ENCODE measurements at regions of chr6 and their contacts with region 1.

Region 1: DNA sequence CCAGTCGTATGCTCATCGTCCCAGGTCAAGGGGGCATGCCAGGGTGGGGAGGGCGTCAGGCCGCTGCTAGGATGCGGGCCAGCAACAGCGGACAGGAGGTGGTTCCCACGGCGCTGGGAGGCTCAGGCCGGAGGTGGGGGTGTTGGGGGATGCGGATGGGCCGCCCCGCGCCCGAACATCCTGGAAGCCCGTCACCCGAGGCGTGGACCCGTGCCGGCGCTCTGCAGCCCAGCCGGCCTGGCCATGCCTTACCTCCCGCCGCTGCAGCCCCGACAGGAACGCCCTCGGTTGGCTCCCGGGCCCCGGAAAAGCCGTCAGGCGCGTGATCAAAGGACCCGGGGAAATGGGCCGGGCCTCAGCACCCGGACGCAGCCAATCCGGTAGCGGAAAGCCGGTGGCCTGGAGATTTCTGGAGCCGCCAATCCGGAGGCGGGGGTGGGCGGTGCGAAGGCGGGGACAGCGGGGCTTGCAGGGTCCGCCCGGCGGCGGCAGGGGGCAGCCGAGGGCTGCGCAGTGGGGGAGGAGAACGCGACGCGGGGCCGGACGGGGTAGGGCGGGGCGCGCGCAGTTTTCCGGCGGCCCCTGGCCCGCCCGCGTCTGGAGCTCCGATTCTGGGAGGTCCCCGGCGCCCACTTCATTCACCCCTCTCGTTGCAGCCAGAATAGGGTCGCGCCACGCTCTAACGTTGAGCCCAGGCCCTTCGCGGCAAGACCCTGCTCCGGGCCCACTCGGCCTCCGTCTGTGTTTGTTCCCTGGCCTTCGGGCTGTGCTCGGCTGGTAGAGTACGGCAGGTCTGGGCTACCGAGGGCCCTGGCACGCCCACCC is at the start of gene SMIM29:
- DNase-seq: peak; percentile 100
- H3K4me3 Mint-ChIP-seq: peak within 1 kb of the TSS; percentile 81
- H3K27ac Mint-ChIP-seq: peak within 1 kb of the TSS; percentile 97
- H3K4me1 Mint-ChIP-seq: peaks cover 55% of the 10 kb centered on the region
- H3K27me3 Mint-ChIP-seq: no peaks in the 10 kb centered on the region
- CTCF ChIP-seq: peak; percentile 99
- total RNA-seq, gene SMIM29: 59.2 and 68.6 TPM in 2 replicates

Region 2: GRCh38 chr6:34044945-34045595 is 203.9 kb before region 1 on chr6:
- CTCF ChIA-PET with region 1: interaction called, 10 read pairs
- intact Hi-C with region 1: no loop called
- DNase-seq: no peak
- H3K4me3 Mint-ChIP-seq: no peak overlapping the region
- H3K27ac Mint-ChIP-seq: no peak overlapping the region
- H3K4me1 Mint-ChIP-seq: no peaks in the 10 kb centered on the region
- H3K27me3 Mint-ChIP-seq: peaks cover 74% of the 10 kb centered on the region
- CTCF ChIP-seq: no peak